ENCODE measurements at regions of chr17 and their contacts with region 1.

Region 1: DNA sequence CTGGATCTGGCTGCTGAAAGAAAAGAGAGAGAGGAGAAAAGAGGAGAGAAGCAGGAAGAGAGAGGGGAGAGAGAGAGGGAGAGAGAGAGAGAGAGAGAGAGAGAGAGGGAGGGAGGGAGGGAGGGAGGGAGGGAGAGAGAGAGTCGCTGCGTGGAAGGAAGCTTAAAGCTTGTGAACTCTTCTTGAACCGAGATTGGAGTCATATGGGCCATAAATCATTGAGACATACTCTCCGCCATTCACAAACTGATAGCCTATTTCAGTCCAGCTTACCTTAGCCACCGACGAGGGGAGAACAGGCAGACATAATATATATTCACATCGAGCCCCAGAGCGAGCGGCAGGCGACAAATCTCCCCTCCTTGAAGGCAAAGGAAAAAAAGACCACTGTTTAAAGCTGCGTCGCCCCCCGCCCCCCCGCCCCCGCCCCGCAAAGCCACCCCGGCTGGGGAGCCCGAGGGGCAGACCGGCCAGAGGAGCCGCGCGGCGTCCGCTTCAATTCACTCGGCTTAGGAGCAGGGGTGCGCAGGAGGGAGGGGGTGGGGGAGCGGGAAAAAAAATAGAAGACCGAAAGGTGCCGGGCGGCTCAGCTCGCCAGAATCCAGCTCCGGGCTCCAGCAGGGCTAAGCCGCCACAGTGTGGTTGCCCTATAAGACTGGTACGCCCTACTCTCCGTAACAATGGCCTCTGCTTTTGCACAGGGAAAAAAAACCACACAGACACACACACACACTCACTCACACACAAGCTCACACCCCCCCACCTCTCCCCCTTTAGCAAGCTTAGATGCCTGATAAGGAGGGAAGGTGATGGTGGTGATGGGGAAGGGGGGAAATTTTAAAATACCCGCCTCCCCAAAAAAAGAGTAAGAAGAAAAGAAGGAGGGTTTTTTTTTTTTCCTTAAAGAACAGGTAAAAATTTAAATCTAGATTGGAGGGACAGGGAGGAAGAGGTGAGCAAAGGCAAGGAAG is 10.6 kb upstream of the HOXB2 start:
- DNase-seq: peak; percentile 31
- H3K4me3 Mint-ChIP-seq: peak overlapping the region; percentile 82
- H3K27ac Mint-ChIP-seq: no peak overlapping the region
- H3K4me1 Mint-ChIP-seq: peaks cover 6% of the 10 kb centered on the region
- H3K27me3 Mint-ChIP-seq: peaks cover 7% of the 10 kb centered on the region

Region 2: DNA sequence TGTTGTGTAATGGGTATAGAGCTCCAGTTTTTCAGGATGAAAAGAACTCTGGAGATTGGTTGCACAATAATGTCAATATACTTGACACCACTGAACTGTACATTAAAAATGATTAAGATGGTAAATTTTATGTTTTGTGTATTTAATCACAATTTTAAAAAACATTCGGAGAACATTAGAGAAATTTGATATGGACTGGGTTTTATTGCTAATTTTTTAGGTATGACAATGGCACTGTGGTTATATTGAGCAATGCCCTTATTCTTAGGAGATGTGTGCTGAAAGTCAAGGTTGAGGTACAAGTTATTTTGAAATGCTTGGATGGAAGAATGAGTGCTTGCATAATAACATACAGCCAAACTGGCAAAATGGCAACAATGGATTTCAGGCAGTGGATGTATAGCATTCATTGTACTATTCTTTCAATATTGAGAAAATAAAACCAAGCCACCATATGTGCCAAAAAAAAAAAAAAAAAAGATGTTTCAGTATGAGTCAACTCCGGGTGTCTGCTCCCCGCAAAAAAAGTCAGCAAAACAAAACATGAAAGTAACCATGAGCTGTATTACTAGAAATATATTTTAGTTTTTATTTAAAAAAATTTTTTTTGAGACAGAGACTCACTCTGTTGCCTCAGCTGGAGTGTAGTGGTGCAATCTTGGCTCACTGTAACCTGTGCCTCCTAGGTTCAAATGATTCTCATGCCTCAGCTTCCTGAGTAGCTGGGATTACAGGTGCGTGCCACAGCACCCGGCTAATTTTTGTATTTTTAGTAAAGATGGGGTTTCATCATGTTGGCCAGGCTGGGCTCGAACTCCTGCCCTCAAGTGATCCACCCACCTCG is 44.6 kb before region 1 on chr17:
- CTCF ChIA-PET with region 1: interaction called, 4 read pairs
- intact Hi-C with region 1: loop called (anchors 1 kb)
- DNase-seq: peak; percentile 71
- H3K4me3 Mint-ChIP-seq: peak overlapping the region; percentile 22
- H3K27ac Mint-ChIP-seq: peak overlapping the region; percentile 89
- H3K4me1 Mint-ChIP-seq: peaks cover 39% of the 10 kb centered on the region
- H3K27me3 Mint-ChIP-seq: no peaks in the 10 kb centered on the region

Region 3: GRCh38 chr17:48618256-48618897 is 62.8 kb after region 1 on chr17:
- CTCF ChIA-PET with region 1: no interaction called
- intact Hi-C with region 1: no loop called
- DNase-seq: peak; percentile 88
- H3K4me3 Mint-ChIP-seq: no peak overlapping the region
- H3K27ac Mint-ChIP-seq: no peak overlapping the region
- H3K4me1 Mint-ChIP-seq: peaks cover 40% of the 10 kb centered on the region
- H3K27me3 Mint-ChIP-seq: peaks cover 84% of the 10 kb centered on the region